ENCODE measurements at regions of chr7 and their contacts with region 1.

Region 1: GRCh38 chr7:152894273-152895170 is 135.0 kb downstream of the ACTR3B start:
- DNase-seq: peak; percentile 14
- H3K4me3 Mint-ChIP-seq: no peak overlapping the region
- H3K27ac Mint-ChIP-seq: no peak overlapping the region
- H3K4me1 Mint-ChIP-seq: no peaks in the 10 kb centered on the region
- H3K27me3 Mint-ChIP-seq: peaks cover 9% of the 10 kb centered on the region

Region 2: DNA sequence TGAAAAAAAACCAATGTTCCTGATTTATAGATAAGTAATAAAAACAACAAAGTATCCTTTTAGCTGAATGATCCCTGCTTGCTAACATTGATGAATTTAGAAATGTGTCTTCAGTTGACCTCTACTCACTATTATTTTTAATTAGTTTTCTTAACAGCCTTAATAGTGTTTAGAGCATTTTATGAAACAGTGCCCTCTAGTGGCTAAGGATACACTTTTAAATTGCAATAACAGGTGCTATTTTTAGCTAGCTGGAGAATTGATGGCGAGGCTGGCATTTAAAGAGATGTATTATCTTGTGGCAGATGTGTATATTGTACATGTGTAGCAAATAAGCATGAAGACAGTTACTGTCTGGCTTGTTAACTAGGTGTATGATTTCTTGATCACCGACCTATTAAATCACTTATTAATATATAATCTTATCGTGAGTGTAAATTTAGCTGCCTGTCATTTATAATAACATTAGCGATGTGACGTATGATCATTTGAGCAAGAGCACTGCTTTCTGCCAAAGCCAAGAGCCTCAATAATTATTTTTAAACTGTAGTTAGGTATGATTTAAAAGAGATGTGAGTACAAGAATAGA is 1609.5 kb after region 1 on chr7:
- CTCF ChIA-PET with region 1: no interaction called
- intact Hi-C with region 1: loop called (anchors 5 kb)
- DNase-seq: no peak
- H3K4me3 Mint-ChIP-seq: no peak overlapping the region
- H3K27ac Mint-ChIP-seq: no peak overlapping the region
- H3K4me1 Mint-ChIP-seq: no peaks in the 10 kb centered on the region
- H3K27me3 Mint-ChIP-seq: no peaks in the 10 kb centered on the region